IMR-90 (cell line): ENCODE measurements at regions of chr2 and their contacts with region 1.

Region 1: GRCh38 chr2:57180042-57180567 is 866.5 kb upstream of the VRK2 start:
- DNase-seq: peak; percentile 8
- ATAC-seq: no peak
- H3K4me3 ChIP-seq: no peak overlapping the region
- H3K27ac ChIP-seq: no peak overlapping the region
- H3K4me1 ChIP-seq: no peaks in the 10 kb centered on the region
- H3K27me3 ChIP-seq: no peaks in the 10 kb centered on the region
- CTCF ChIP-seq: no peak
- POLR2A ChIP-seq: no peak
- RAD21 ChIP-seq: no peak

Region 2: GRCh38 chr2:55547001-55547400 is 1633.1 kb before region 1 on chr2:
- CTCF ChIA-PET with region 1: no interaction called
- POLR2A ChIA-PET with region 1: no interaction called
- dilution Hi-C with region 1: no loop called
- in situ Hi-C with region 1: no loop called
- intact Hi-C with region 1: loop called (anchors 10 kb)
- DNase-seq: peak; percentile 37
- ATAC-seq: no peak
- H3K4me3 ChIP-seq: no peak overlapping the region
- H3K27ac ChIP-seq: no peak overlapping the region
- H3K4me1 ChIP-seq: no peaks in the 10 kb centered on the region
- H3K27me3 ChIP-seq: no peaks in the 10 kb centered on the region
- CTCF ChIP-seq: no peak
- POLR2A ChIP-seq: no peak
- RAD21 ChIP-seq: no peak

Region 3: GRCh38 chr2:57906152-57906732 is 726.1 kb after region 1 on chr2:
- CTCF ChIA-PET with region 1: no interaction called
- POLR2A ChIA-PET with region 1: no interaction called
- dilution Hi-C with region 1: no loop called
- in situ Hi-C with region 1: no loop called
- intact Hi-C with region 1: no loop called
- DNase-seq: peak; percentile 69
- ATAC-seq: peak; percentile 99
- H3K4me3 ChIP-seq: no peak overlapping the region
- H3K27ac ChIP-seq: no peak overlapping the region
- H3K4me1 ChIP-seq: no peaks in the 10 kb centered on the region
- H3K27me3 ChIP-seq: no peaks in the 10 kb centered on the region
- CTCF ChIP-seq: peak; percentile 92
- POLR2A ChIP-seq: 0 out of 2 replicates have a peak, but pooled peaks have one; percentile 40
- RAD21 ChIP-seq: peak; percentile 97